Activated B cell treated with CpG ODN at 0.5 μM for 24 hours (primary cell): ENCODE measurements at regions of chr7 and their contacts with region 1.

Region 1: DNA sequence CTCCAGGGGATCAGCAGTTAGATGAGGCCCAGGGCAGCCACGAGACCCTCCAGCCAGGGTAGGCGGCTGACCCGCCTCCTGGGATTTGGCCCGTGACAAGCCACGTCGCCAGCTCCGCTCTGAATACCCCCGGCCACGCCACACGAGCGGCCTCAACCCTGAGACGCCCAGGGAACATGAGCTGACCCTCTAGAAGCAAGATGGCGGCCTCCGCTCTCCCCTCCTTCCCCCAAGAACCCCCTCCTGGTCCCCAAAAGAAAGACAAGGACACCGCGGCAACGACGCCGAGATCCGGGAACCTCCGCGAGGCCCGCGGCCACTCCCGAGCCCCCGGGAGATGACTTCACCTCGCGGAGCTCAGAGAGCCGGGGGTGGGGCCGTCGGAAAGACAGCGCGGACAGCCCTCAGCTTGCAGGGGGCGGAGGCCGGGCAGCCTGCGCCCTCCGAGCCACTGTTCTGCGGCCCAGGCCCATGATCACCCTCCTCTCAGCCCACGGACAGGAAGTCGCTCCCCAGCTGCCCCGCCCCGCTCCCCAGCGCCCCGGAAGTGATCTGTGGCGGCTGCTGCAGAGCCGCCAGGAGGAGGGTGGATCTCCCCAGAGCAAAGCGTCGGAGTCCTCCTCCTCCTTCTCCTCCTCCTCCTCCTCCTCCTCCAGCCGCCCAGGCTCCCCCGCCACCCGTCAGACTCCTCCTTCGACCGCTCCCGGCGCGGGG is at the start of gene RALA:
- DNase-seq: peak; percentile 84
- ATAC-seq: peak; percentile 91
- H3K4me3 Mint-ChIP-seq: peak within 1 kb of the TSS; percentile 94
- H3K27ac Mint-ChIP-seq: peak within 1 kb of the TSS; percentile 91
- H3K4me1 Mint-ChIP-seq: peaks cover 55% of the 10 kb centered on the region
- H3K27me3 Mint-ChIP-seq: no peaks in the 10 kb centered on the region
- CTCF ChIP-seq: no peak
- total RNA-seq, gene RALA: 32.6 and 37.3 TPM in 2 replicates

Region 2: GRCh38 chr7:37786741-37787569 is 1836.2 kb before region 1 on chr7:
- CTCF ChIA-PET with region 1: no interaction called
- POLR2A ChIA-PET with region 1: no interaction called
- intact Hi-C with region 1: loop called (anchors 5 kb)
- DNase-seq: no peak
- ATAC-seq: peak; percentile 89
- H3K4me3 Mint-ChIP-seq: peak overlapping the region; percentile 74
- H3K27ac Mint-ChIP-seq: peak overlapping the region; percentile 99
- H3K4me1 Mint-ChIP-seq: peaks cover 41% of the 10 kb centered on the region
- H3K27me3 Mint-ChIP-seq: no peaks in the 10 kb centered on the region
- CTCF ChIP-seq: no peak

Region 3: DNA sequence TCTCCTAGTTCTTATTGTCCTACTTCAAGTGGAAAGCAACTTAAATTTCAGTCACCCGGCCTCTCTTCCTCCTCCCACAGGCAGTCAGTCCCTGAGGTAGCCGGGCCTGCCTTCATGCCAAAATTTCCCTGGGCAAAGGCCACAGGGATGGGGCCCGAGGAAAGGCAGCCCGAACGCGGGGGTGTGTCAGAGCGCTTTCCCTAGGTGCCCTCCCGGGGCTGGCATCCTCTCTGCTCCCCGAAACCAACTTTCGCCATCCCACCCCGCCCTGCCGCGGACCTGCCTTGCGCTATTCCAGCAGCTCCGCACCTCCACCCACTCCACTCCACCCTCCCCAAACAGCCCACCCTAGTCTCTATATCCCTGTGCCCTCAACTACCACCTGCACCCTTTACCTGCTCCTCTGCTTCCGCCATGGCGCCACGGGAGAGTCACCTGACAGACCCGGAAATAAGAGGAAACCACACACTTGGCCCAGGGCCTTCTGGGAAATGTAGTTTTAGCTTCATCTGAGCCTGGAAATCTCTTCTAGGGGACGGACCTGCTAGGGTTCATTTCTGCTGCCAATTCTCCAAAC is 714.3 kb before region 1 on chr7 and contains the start of gene VPS41:
- CTCF ChIA-PET with region 1: no interaction called
- POLR2A ChIA-PET with region 1: no interaction called
- intact Hi-C with region 1: loop called (anchors 5 kb)
- DNase-seq: peak; percentile 56
- ATAC-seq: peak; percentile 96
- H3K4me3 Mint-ChIP-seq: peak within 1 kb of the TSS; percentile 98
- H3K27ac Mint-ChIP-seq: peak within 1 kb of the TSS; percentile 94
- H3K4me1 Mint-ChIP-seq: peaks cover 52% of the 10 kb centered on the region
- H3K27me3 Mint-ChIP-seq: peaks cover 2% of the 10 kb centered on the region
- CTCF ChIP-seq: no peak
- total RNA-seq, gene VPS41: 78.5 and 91.8 TPM in 2 replicates

Region 4: GRCh38 chr7:39504963-39505362 is 118.2 kb before region 1 on chr7:
- CTCF ChIA-PET with region 1: no interaction called
- POLR2A ChIA-PET with region 1: no interaction called
- intact Hi-C with region 1: no loop called
- DNase-seq: no peak
- ATAC-seq: no peak
- H3K4me3 Mint-ChIP-seq: no peak overlapping the region
- H3K27ac Mint-ChIP-seq: no peak overlapping the region
- H3K4me1 Mint-ChIP-seq: peaks cover 8% of the 10 kb centered on the region
- H3K27me3 Mint-ChIP-seq: peaks cover 11% of the 10 kb centered on the region
- CTCF ChIP-seq: no peak

Region 5: GRCh38 chr7:39580149-39580874 is 42.9 kb before region 1 on chr7:
- CTCF ChIA-PET with region 1: interaction called, 14 read pairs
- POLR2A ChIA-PET with region 1: interaction called, 21 read pairs
- intact Hi-C with region 1: loop called (anchors 2 kb)
- DNase-seq: peak; percentile 39
- ATAC-seq: peak; percentile 97
- H3K4me3 Mint-ChIP-seq: no peak overlapping the region
- H3K27ac Mint-ChIP-seq: no peak overlapping the region
- H3K4me1 Mint-ChIP-seq: peaks cover 3% of the 10 kb centered on the region
- H3K27me3 Mint-ChIP-seq: no peaks in the 10 kb centered on the region
- CTCF ChIP-seq: no peak

Region 6: DNA sequence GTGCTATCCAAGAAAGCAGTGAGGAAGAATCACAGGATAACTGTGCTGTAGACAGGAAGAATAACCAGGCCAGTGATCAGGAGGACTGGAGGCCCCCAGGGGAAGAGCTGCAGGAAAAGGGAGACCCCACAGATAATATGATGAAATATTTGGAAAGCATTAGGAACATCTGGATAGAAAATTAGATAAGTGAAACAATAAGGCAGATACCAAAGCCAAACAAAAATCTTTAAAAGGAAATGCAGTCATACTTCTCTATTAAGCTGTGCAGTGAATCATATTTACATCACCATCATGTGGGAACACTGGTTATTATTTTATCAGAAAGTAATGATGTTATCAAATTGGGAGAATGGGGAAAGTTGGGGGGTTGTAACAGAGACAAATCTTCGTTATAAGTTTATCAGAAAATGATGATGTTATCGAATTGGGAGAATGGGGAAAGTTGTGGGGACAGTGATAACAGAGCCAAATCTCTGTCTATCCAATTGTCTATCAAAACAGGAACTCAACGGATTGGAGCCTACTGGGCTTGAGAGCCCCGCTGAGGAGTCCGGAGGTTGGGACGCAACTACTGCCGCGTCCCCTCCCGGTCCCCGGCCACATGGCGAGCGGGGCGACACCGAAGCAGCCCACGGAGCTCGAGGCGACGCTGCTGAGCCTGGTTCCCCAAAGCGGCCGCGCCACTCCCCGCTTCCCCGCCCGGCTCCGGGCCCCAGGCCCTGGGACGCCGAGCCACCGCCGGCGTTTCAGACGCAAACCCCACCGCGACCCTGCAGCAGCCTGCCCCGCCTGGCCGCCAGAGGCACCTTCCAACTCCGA is 13.9 kb before region 1 on chr7:
- CTCF ChIA-PET with region 1: interaction called, 3 read pairs
- POLR2A ChIA-PET with region 1: interaction called, 19 read pairs
- intact Hi-C with region 1: loop called (anchors 1 kb)
- DNase-seq: peak; percentile 25
- ATAC-seq: peak; percentile 71
- H3K4me3 Mint-ChIP-seq: peak overlapping the region; percentile 70
- H3K27ac Mint-ChIP-seq: no peak overlapping the region
- H3K4me1 Mint-ChIP-seq: peaks cover 13% of the 10 kb centered on the region
- H3K27me3 Mint-ChIP-seq: peaks cover 27% of the 10 kb centered on the region
- CTCF ChIP-seq: no peak

Region 7: DNA sequence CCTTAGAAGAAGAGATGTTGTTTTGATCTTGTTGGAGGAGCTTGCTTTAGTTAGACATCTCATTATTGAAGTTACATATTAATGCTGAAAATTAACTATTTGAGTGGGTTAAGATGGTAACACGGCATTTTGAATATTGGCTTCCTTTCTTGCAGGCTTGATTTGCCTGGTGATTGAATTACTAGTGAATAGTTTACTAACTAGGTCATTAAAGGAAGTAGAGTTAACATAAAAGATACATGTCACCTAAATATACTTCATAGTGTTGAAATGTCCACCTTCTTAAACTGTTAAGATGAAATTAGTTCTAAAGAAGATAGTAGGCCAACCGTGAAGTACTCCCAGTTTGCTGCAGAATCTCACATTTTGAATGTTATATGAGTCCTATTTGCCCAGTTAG is 492.8 kb after region 1 on chr7:
- CTCF ChIA-PET with region 1: no interaction called
- POLR2A ChIA-PET with region 1: interaction called, 11 read pairs
- intact Hi-C with region 1: no loop called
- DNase-seq: no peak
- ATAC-seq: no peak
- H3K4me3 Mint-ChIP-seq: no peak overlapping the region
- H3K27ac Mint-ChIP-seq: no peak overlapping the region
- H3K4me1 Mint-ChIP-seq: no peaks in the 10 kb centered on the region
- H3K27me3 Mint-ChIP-seq: no peaks in the 10 kb centered on the region
- CTCF ChIP-seq: no peak